ENCODE measurements at regions of chr6 and their contacts with region 1.

Region 1: GRCh38 chr6:38493931-38494547 is 145.7 kb downstream of the BTBD9 start:
- DNase-seq: peak; percentile 56
- ATAC-seq: peak; percentile 64

Region 2: DNA sequence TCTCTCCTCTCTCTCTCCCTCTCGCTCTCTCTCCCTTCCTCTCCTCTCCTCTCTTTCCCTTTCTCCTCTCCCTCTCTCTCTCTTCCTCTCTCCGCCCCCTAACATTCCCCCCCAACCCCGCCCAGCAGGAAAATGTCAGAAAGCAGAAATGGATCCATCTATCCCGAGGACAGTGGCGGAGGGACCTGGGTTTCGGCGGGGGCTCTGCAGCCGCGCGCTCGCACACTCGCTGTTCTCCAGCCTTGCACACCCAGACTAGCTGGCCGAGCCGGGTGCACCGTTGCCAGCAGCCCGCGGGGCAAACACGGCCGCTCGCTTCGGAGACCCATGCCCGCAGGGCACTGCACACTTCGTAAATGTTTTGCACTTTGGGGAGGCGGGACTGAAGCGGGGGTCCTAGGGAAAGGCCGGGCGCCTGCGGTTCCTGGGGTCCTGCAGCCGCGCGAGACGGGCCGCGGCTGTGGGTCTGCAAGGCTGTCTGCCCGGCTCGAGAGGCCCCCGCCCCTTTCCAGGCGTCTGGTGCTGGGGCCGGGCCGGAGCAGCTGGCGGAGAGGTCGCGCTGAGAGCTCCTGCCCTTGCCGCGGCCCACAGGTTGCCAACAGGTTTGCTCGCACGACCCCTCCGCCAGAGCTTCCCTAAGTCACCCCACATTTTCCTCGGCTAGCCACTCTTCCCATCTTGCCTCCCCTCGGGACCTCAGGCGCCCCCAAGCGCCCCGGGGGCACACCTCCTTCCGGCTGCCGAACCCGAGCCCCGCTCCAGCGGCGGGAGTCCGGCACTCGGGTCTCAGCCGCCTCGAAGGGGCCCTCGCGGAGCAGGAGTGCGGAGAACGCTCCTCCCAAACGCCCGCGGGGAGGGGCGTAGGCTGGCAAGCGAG is 795.5 kb before region 1 on chr6:
- intact Hi-C with region 1: loop called (anchors 5 kb)
- DNase-seq: peak; percentile 63
- ATAC-seq: peak; percentile 51

Region 3: GRCh38 chr6:37791156-37791919 is 702.7 kb before region 1 on chr6:
- intact Hi-C with region 1: loop called (anchors 10 kb)
- DNase-seq: peak; percentile 95
- ATAC-seq: peak; percentile 99

Region 4: DNA sequence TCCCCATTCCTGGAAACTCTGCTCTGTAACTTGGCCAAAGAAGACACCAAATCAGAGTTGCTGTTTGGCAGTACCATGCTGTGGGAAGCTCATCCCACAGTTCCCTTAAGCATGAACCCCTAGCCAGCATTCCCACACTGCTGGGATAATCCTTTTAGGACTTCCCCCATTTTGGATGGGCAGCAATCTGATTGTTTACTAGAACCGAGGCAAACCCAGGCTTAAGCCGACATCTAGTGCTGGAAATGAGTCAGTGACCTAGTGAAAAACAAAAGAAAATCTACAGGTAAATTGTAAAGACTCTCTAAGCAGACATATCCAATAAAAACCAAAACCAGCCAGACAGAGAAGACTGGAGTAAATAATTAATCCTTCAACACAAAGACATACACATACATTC is 226.3 kb after region 1 on chr6:
- intact Hi-C with region 1: no loop called
- DNase-seq: no peak
- ATAC-seq: no peak

Region 5: DNA sequence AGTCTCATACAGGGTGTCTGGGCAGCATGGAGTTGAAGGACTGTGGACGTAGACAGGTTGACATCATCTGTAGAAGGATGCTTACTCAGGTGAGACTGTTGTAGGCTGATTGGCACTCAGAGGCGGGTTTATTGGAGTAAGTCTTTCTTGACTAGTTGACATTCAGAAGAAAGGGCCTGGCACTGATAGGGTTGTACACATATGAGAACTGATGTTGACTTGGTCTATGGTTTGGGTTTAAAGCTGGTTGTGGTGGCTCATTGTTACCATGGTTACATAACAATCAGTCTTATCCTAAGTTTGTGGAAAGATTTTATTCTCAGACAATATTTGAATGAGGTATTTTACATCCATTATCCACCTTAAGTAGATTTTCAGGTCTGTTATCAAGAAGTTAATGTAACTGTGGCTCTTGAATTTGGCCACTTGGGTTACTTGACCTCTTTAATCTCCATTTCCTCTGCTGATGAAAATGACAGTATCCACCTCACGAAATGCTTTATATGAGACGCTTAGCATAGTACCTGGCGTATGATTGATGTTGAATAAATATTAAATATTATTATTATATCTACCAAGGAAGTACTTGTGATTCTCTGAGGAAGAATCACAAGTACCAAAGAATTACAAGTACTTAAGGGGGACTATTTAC is 330.3 kb after region 1 on chr6:
- intact Hi-C with region 1: no loop called
- DNase-seq: no peak
- ATAC-seq: no peak

Measured in Right ventricle myocardium superior (tissue), 1 donor.